ENCODE measurements at regions of chr18 and their contacts with region 1.

Region 1: DNA sequence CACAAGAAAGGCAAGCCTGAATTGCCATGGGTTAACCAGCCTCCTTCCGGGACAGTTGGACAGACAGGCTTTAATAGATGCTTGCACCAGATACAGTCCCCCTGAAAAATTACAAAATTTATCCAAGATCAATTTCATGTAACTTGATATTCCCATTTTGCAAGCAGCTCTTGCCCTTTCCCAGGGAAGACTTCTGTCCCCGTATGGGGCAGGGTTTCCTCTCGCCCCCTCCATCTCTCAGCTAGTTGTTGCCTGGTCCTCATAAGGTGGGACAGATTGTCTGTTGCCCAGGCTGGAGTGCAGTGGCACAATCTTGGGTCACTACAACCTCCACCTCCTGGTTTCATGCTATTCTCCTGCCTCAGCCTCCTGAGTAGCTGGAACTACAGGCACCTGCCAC is 61.2 kb downstream of the TTC39C start:
- DNase-seq: no peak

Region 2: DNA sequence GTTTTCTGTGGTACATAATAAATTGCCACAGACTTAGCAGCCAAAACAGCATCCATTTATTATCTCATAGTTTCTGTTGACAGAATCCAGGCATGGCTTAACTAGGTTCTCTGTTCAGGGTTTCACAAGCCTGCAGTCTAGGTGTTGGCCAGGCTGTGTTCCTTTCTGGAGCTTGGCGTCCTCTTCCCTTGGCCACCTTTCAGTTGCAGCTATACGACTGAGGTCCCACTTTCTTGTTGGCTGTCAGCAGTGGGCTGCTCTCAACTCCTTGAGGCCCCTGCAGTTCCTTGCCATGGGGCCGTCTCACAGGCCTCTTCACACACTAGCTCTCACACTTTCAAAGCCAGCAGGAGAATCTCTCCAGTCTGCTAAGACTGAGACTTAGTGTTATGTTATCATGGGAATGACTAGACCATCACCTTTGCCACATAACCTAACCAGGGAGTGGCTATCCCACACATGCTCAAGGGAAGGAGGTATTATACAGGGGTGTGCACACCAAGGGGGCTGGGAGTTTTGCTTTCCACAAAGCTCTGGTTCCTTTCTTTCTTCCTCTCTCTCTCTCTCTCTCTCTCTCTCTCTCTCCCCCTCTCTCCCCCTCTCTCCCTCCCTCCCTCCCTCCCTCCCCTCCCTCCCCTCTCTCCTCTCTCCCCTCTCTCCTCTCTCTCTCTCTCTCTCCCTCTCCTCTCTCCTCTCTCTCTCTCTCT is 606.8 kb before region 1 on chr18:
- intact Hi-C with region 1: no loop called
- DNase-seq: no peak

Region 3: GRCh38 chr18:24014062-24014985 is 61.4 kb before region 1 on chr18 and contains the start of gene TTC39C:
- intact Hi-C with region 1: loop called in 1 of 2 experiments (anchors 10 kb)
- DNase-seq: peak; percentile 93
- total RNA-seq, gene TTC39C: 37.4 to 44.6 TPM

Region 4: GRCh38 chr18:24039671-24040070 is 36.1 kb before region 1 on chr18:
- intact Hi-C with region 1: loop called in 1 of 2 experiments (anchors 5 kb)
- DNase-seq: no peak

Region 5: DNA sequence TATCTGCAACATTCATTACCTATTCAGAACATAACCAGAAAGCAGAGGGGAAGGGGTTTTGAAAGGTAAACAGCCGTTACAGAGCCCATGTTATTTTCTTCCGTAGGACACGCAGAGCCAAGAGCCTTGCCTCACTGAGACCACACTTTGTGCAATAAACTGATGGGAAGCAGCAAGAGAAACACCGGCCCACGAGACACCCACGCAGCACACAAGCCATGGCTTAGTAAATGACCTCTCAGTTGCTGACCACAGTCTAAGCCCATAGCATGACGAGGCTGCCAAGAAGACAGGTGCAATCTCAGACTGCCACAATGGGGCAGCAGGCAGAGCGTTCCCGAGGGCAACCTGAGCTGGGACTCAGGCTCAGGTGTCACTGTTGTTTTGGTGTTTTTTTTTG is 122.7 kb after region 1 on chr18:
- intact Hi-C with region 1: no loop called
- DNase-seq: no peak

Measured in posterior vena cava (tissue), 2 donors.